GM12878 (cell line): ENCODE measurements at regions of chr1 and their contacts with region 1.

Region 1: GRCh38 chr1:90721210-90722194 is 4.4 kb upstream of the BARHL2 start:
- DNase-seq: no peak
- ATAC-seq: peak; percentile 89
- H3K4me3 ChIP-seq: no peak overlapping the region
- H3K27ac ChIP-seq: no peak overlapping the region
- H3K4me1 ChIP-seq: no peaks in the 10 kb centered on the region
- H3K27me3 ChIP-seq: peaks cover 11 to 24% of the 10 kb centered on the region in 2 experiments
- CTCF ChIP-seq: peak; percentile 87 to 91 (median 91)
- EP300 ChIP-seq: no peak
- POLR2A ChIP-seq: no peak
- RAD21 ChIP-seq: peak; percentile 72

Region 2: GRCh38 chr1:90114521-90115141 is 606.9 kb before region 1 on chr1:
- CTCF ChIA-PET with region 1: interaction called, 8 read pairs
- POLR2A ChIA-PET with region 1: no interaction called
- RAD21 ChIA-PET with region 1: no interaction called
- SMC1A ChIA-PET with region 1: interaction called, 7 read pairs
- in situ Hi-C with region 1: no loop called
- intact Hi-C with region 1: loop called (anchors 5 kb)
- DNase-seq: peak; percentile 8
- ATAC-seq: peak; percentile 65
- H3K4me3 ChIP-seq: no peak overlapping the region
- H3K27ac ChIP-seq: no peak overlapping the region
- H3K4me1 ChIP-seq: no peaks in the 10 kb centered on the region
- H3K27me3 ChIP-seq: no peaks in the 10 kb centered on the region
- CTCF ChIP-seq: peak; percentile 55 to 73 (median 72); a peak in 5 of 6 replicates
- EP300 ChIP-seq: no peak
- POLR2A ChIP-seq: no peak
- RAD21 ChIP-seq: peak; percentile 93

Region 3: DNA sequence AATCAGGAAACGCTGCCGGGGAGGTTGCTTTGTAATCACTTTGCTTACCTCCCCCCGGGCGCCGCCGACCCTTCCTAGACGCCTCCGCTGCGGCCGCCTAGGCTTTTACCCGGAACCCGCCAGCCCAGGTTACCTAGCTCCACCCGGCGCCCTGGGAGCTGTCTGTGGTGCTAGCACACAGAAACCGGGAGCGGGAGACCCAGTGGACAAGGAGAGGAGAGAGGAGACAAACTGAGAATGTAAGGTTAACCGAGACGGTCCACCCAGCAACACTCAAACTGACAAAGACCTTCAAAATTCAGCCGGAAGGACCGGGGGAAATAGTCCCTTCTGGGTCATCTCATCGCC is 14.2 kb before region 1 on chr1:
- CTCF ChIA-PET with region 1: interaction called, 10 read pairs
- POLR2A ChIA-PET with region 1: no interaction called
- RAD21 ChIA-PET with region 1: no interaction called
- SMC1A ChIA-PET with region 1: no interaction called
- in situ Hi-C with region 1: no loop called
- intact Hi-C with region 1: no loop called
- DNase-seq: no peak
- ATAC-seq: peak; percentile 44
- H3K4me3 ChIP-seq: no peak overlapping the region
- H3K27ac ChIP-seq: no peak overlapping the region
- H3K4me1 ChIP-seq: no peaks in the 10 kb centered on the region
- H3K27me3 ChIP-seq: peaks cover 16 to 18% of the 10 kb centered on the region in 2 experiments
- CTCF ChIP-seq: no peak
- EP300 ChIP-seq: no peak
- POLR2A ChIP-seq: no peak
- RAD21 ChIP-seq: no peak

Region 4: GRCh38 chr1:90821793-90822359 is 100.4 kb after region 1 on chr1:
- CTCF ChIA-PET with region 1: no interaction called
- POLR2A ChIA-PET with region 1: no interaction called
- RAD21 ChIA-PET with region 1: no interaction called
- SMC1A ChIA-PET with region 1: no interaction called
- in situ Hi-C with region 1: no loop called
- intact Hi-C with region 1: no loop called
- DNase-seq: no peak
- ATAC-seq: no peak; the same call in 1 of the 3 replicates
- H3K4me3 ChIP-seq: no peak overlapping the region
- H3K27ac ChIP-seq: no peak overlapping the region
- H3K4me1 ChIP-seq: no peaks in the 10 kb centered on the region
- H3K27me3 ChIP-seq: no peaks in the 10 kb centered on the region
- CTCF ChIP-seq: no peak
- EP300 ChIP-seq: no peak
- POLR2A ChIP-seq: no peak
- RAD21 ChIP-seq: no peak

Region 5: DNA sequence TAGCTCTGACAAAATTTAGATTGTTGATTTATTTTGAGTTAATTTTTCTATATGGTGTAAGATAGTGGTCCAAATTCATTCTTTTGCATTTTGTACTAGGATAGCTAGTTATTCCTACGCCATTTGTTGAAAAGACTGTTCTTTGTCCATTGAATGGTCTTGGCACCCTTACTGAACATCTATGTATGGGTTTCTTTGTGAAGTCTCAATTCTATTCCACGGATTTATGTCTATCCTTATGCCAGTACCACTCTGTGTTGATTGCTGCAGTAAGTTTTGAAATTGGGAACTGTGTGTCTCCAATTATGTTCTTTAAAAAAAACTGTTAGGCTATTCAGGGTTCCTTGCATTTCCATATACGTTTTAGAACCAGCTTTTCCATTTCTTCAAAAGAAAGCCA is 154.6 kb after region 1 on chr1:
- CTCF ChIA-PET with region 1: no interaction called
- POLR2A ChIA-PET with region 1: no interaction called
- RAD21 ChIA-PET with region 1: no interaction called
- SMC1A ChIA-PET with region 1: no interaction called
- in situ Hi-C with region 1: no loop called
- intact Hi-C with region 1: no loop called
- DNase-seq: no peak
- ATAC-seq: no peak
- H3K4me3 ChIP-seq: no peak overlapping the region
- H3K27ac ChIP-seq: no peak overlapping the region
- H3K4me1 ChIP-seq: no peaks in the 10 kb centered on the region
- H3K27me3 ChIP-seq: no peaks in the 10 kb centered on the region
- CTCF ChIP-seq: no peak
- EP300 ChIP-seq: no peak
- POLR2A ChIP-seq: no peak
- RAD21 ChIP-seq: no peak

Region 6: DNA sequence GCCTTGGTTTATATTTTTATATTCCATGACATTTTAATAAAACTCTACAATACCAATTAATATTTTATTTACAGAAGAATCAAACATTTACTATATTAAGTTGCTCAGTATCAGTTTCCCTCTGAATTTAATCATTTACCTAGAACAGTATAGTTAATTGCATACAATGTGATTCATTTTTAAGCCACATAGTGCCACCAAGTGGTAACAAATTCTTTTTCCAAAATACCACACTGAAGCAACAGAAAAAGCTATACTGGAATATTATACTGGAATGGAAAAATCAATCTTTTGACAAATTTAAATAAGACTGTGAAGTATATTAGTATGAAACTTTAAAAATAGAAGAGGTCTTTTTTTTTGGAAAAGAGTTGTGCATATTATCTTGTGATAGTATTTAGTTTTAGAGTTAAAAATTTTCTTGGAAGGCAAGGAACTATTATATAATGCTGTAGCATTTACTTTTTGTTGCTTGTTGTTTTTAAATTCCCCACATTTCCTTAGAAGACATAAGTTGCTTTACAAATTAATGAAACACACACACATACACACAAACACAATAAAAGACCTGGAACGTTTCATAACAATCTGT is 243.0 kb after region 1 on chr1:
- CTCF ChIA-PET with region 1: interaction called, 17 read pairs
- POLR2A ChIA-PET with region 1: no interaction called
- RAD21 ChIA-PET with region 1: interaction called, 16 read pairs
- SMC1A ChIA-PET with region 1: interaction called, 14 read pairs
- in situ Hi-C with region 1: loop called (anchors 5 kb)
- intact Hi-C with region 1: loop called (anchors 1 kb)
- DNase-seq: no peak
- ATAC-seq: peak; percentile 65
- H3K4me3 ChIP-seq: no peak overlapping the region
- H3K27ac ChIP-seq: no peak overlapping the region
- H3K4me1 ChIP-seq: peaks cover 5% of the 10 kb centered on the region; the same call in 1 of the 2 replicates
- H3K27me3 ChIP-seq: no peaks in the 10 kb centered on the region
- CTCF ChIP-seq: peak; percentile 12 to 56 (median 18); a peak in 2 of 6 replicates
- EP300 ChIP-seq: no peak
- POLR2A ChIP-seq: no peak
- RAD21 ChIP-seq: peak; percentile 43

Region 7: DNA sequence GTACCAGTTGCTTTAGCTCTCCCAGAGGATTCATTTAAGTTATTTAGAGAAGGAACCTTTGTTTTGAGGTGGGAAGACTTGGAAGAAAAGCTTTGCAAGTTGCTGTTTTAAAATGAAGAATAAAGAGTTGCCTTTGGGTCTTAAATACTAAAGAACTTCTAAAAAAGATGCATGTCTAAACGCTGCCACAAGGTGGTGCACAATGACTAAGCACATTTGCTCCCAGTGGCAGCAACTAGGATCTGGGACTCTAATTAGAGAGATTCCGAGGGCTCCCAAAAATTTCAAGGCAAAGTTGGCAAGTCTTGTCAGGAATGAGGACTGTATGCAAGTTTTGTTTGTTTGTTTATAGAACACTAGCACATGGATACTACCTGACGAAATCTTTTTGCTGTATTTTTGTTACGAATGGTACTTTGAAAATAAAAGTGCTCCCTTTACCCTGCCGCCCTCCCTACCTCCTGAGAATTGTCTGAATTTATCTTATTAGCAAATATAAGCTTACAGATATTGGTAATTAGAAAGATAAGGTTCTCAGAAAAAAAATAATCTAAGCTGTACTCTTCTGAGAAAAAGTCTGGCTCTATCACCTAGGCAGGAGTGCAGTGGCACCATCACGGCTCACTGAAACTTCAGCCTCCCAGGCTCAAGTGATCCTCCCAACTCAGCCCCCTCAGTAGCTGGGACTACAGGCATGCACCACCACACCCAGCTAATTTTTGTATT is 561.4 kb after region 1 on chr1:
- CTCF ChIA-PET with region 1: interaction called, 13 read pairs
- POLR2A ChIA-PET with region 1: no interaction called
- RAD21 ChIA-PET with region 1: interaction called, 6 read pairs
- SMC1A ChIA-PET with region 1: interaction called, 4 read pairs
- in situ Hi-C with region 1: no loop called
- intact Hi-C with region 1: no loop called
- DNase-seq: peak; percentile 9
- ATAC-seq: peak; percentile 76
- H3K4me3 ChIP-seq: no peak overlapping the region
- H3K27ac ChIP-seq: no peak overlapping the region
- H3K4me1 ChIP-seq: no peaks in the 10 kb centered on the region
- H3K27me3 ChIP-seq: no peaks in the 10 kb centered on the region
- CTCF ChIP-seq: peak; percentile 71 to 75 (median 71)
- EP300 ChIP-seq: no peak
- POLR2A ChIP-seq: no peak
- RAD21 ChIP-seq: peak; percentile 84